ENCODE measurements at regions of chr3 and their contacts with region 1.

Region 1: GRCh38 chr3:100047455-100048141 is 66.7 kb downstream of the FILIP1L start:
- DNase-seq: peak; percentile 82
- ATAC-seq: peak; percentile 67
- H3K4me3 ChIP-seq: peak overlapping the region; percentile 16 to 47 (median 34)
- H3K4me3 Mint-ChIP-seq: peak overlapping the region; percentile 89
- H3K27ac ChIP-seq: peak overlapping the region; percentile 75 to 82
- H3K27ac Mint-ChIP-seq: peak overlapping the region; percentile 97
- H3K4me1 ChIP-seq: peaks cover 59 to 60% of the 10 kb centered on the region in 2 donors
- H3K4me1 Mint-ChIP-seq: peaks cover 63% of the 10 kb centered on the region
- H3K27me3 ChIP-seq: no peaks in the 10 kb centered on the region
- H3K27me3 Mint-ChIP-seq: no peaks in the 10 kb centered on the region
- CTCF ChIP-seq: no peak

Region 2: GRCh38 chr3:98901392-98902350 is 1145.9 kb before region 1 on chr3 and contains the start of gene DCBLD2:
- CTCF ChIA-PET with region 1: no interaction called
- POLR2A ChIA-PET with region 1: no interaction called
- intact Hi-C with region 1: loop called (anchors 10 kb)
- DNase-seq: peak; percentile 95
- ATAC-seq: peak; percentile 98
- H3K4me3 ChIP-seq: peak within 1 kb of the TSS; percentile 60 to 93 (median 68)
- H3K4me3 Mint-ChIP-seq: peak within 1 kb of the TSS; percentile 97
- H3K27ac ChIP-seq: peak within 1 kb of the TSS in 1 of 2 donors; percentile 64
- H3K27ac Mint-ChIP-seq: peak within 1 kb of the TSS; percentile 84
- H3K4me1 ChIP-seq: peaks cover 10 to 12% of the 10 kb centered on the region in 2 donors
- H3K4me1 Mint-ChIP-seq: peaks cover 17% of the 10 kb centered on the region
- H3K27me3 ChIP-seq: peaks cover 0 to 7% (median 2%) of the 10 kb centered on the region in 4 experiments
- H3K27me3 Mint-ChIP-seq: peaks cover 12% of the 10 kb centered on the region
- CTCF ChIP-seq: no peak
- total RNA-seq, gene DCBLD2: 2.1 and 3.5 TPM in 2 replicates

Region 3: GRCh38 chr3:99627062-99627826 is 420.4 kb before region 1 on chr3:
- CTCF ChIA-PET with region 1: no interaction called
- POLR2A ChIA-PET with region 1: no interaction called
- intact Hi-C with region 1: no loop called
- DNase-seq: no peak
- ATAC-seq: no peak
- H3K4me3 ChIP-seq: no peak overlapping the region
- H3K4me3 Mint-ChIP-seq: no peak overlapping the region
- H3K27ac ChIP-seq: no peak overlapping the region
- H3K27ac Mint-ChIP-seq: no peak overlapping the region
- H3K4me1 ChIP-seq: no peaks in the 10 kb centered on the region
- H3K4me1 Mint-ChIP-seq: no peaks in the 10 kb centered on the region
- H3K27me3 ChIP-seq: no peaks in the 10 kb centered on the region
- H3K27me3 Mint-ChIP-seq: peaks cover 3% of the 10 kb centered on the region
- CTCF ChIP-seq: no peak

Region 4: GRCh38 chr3:99875929-99876841 is 171.4 kb before region 1 on chr3:
- CTCF ChIA-PET with region 1: no interaction called
- POLR2A ChIA-PET with region 1: no interaction called
- intact Hi-C with region 1: loop called (anchors 5 kb)
- DNase-seq: peak; percentile 86
- ATAC-seq: peak; percentile 97
- H3K4me3 ChIP-seq: peak overlapping the region; percentile 52 to 74 (median 64)
- H3K4me3 Mint-ChIP-seq: peak overlapping the region; percentile 89
- H3K27ac ChIP-seq: peak overlapping the region; percentile 24 to 71
- H3K27ac Mint-ChIP-seq: peak overlapping the region; percentile 5
- H3K4me1 ChIP-seq: peaks cover 6 to 8% of the 10 kb centered on the region in 2 donors
- H3K4me1 Mint-ChIP-seq: peaks cover 18% of the 10 kb centered on the region
- H3K27me3 ChIP-seq: no peaks in the 10 kb centered on the region
- H3K27me3 Mint-ChIP-seq: no peaks in the 10 kb centered on the region
- CTCF ChIP-seq: no peak

Region 5: GRCh38 chr3:100068826-100069225 is 21.2 kb after region 1 on chr3:
- CTCF ChIA-PET with region 1: interaction called, 18 read pairs
- POLR2A ChIA-PET with region 1: interaction called, 4 read pairs
- intact Hi-C with region 1: loop called (anchors 2 kb)
- DNase-seq: peak; percentile 84
- ATAC-seq: peak; percentile 95
- H3K4me3 ChIP-seq: no peak overlapping the region
- H3K4me3 Mint-ChIP-seq: peak overlapping the region; percentile 53
- H3K27ac ChIP-seq: no peak overlapping the region
- H3K27ac Mint-ChIP-seq: peak overlapping the region; percentile 57
- H3K4me1 ChIP-seq: peaks cover 37% of the 10 kb centered on the region in 2 donors
- H3K4me1 Mint-ChIP-seq: peaks cover 42% of the 10 kb centered on the region
- H3K27me3 ChIP-seq: no peaks in the 10 kb centered on the region
- H3K27me3 Mint-ChIP-seq: no peaks in the 10 kb centered on the region
- CTCF ChIP-seq: peak; percentile 86

Region 6: DNA sequence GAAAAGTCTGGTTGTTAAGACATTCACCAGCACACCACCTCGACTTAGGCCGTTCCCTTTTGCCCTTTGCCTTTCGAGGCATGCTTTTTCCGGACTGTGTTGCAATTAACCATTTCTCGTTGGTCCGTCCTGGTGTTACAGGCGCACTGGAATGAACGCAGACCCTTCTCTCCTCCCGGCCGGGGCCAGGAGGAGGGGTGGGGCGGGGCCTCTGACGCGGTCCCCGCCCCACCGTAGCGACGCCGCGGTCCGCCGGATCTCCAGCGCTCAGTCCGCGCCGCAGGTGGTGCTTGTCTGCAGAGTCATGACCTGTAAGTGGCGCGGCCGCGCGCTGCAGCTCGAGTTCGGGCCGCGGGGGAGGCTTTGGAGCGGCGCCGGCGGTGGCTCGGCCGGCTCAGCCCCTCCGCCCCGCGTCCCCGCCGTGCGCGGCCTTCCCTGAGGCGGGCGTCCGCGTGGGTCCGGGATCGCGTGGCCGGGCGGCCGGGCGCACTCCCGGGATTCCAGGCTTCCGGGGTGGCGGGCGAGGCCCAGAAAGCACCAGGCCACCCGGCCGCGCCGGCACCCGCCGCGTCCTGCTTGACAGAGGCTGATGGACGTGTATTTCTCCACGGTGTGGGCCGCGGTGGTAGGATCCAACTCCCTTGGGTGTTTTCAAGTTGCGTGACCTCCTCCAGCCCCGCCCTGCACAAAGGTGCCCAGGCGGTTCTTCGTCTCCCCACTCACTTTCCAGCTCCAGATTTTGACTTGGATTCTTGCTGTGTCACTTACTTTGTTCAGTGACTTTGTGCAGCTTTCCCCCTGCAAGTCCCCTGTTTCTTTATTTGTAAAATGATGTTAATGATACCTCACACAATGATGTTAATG is 287.1 kb after region 1 on chr3 and contains the start of gene NIT2:
- CTCF ChIA-PET with region 1: no interaction called
- POLR2A ChIA-PET with region 1: no interaction called
- intact Hi-C with region 1: loop called (anchors 1 kb)
- DNase-seq: peak; percentile 88
- ATAC-seq: peak; percentile 98
- H3K4me3 ChIP-seq: peak within 1 kb of the TSS; percentile 54 to 82 (median 72)
- H3K4me3 Mint-ChIP-seq: peak within 1 kb of the TSS; percentile 96
- H3K27ac ChIP-seq: peak within 1 kb of the TSS; percentile 54 to 79
- H3K27ac Mint-ChIP-seq: peak within 1 kb of the TSS; percentile 91
- H3K4me1 ChIP-seq: peaks cover 5 to 16% of the 10 kb centered on the region in 2 donors
- H3K4me1 Mint-ChIP-seq: peaks cover 23% of the 10 kb centered on the region
- H3K27me3 ChIP-seq: no peaks in the 10 kb centered on the region
- H3K27me3 Mint-ChIP-seq: no peaks in the 10 kb centered on the region
- CTCF ChIP-seq: no peak
- total RNA-seq, gene NIT2: 34.4 and 36.5 TPM in 2 replicates

Measured in B cell (primary cell).